PC-9 (cell line): ENCODE measurements at regions of chr15 and their contacts with region 1.

Region 1: DNA sequence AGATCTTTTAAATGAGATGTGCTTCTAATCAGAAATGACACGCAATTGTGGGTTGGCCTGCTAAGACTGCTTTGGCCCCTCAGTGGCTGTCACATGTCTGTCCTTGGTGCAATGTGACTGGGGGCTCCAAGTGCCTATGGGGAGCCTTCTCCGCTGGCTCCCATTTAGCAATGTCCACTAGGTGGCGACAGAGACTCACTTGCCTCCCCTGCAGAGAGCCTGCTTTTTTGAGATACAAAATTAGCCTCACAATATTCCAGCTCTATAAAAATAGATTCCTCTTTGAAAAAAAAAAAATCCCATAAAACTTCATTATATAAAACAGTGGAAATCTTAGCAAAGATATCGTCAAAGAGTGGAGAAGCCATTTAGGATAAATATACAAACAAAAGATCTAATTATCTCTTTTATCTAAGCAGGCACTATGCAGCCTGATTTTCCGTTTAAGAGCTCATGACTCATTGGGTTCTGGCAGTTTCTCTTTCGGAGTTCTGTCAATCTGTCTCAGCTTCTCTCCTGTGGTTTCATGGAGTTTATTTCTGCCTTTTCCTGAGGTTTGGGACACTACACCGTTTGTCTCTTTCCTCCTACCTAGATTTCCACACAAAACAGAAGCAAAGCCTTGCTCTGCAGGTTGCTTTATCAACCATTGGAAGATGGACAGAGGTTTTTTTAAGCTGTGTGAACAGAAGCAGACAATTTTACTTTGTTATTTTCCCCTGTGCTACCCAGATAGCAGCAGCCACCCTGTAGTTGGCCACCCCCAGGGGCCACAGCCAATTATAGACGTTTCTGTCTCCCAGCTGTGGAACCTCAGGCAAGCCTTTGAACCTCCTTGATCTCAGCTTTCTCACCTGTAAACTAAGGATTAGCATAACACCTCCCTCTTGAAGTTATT is 68.4 kb upstream of the TNFAIP8L3 start:
- DNase-seq: peak in 1 of 2 experiments; percentile 58
- H3K4me3 ChIP-seq: no peak overlapping the region
- H3K27ac ChIP-seq: no peak overlapping the region
- H3K4me1 ChIP-seq: no peaks in the 10 kb centered on the region
- H3K27me3 ChIP-seq: no peaks in the 10 kb centered on the region
- CTCF ChIP-seq: peak; percentile 90

Region 2: GRCh38 chr15:51281368-51281967 is 118.4 kb after region 1 on chr15:
- CTCF ChIA-PET with region 1: interaction called, 4 read pairs
- POLR2A ChIA-PET with region 1: no interaction called
- intact Hi-C with region 1: loop called (anchors 1 kb)
- DNase-seq: peak in 1 of 2 experiments; percentile 26
- H3K4me3 ChIP-seq: no peak overlapping the region
- H3K27ac ChIP-seq: no peak overlapping the region
- H3K4me1 ChIP-seq: no peaks in the 10 kb centered on the region
- H3K27me3 ChIP-seq: peaks cover 12% of the 10 kb centered on the region; the same call in 1 of the 2 replicates
- CTCF ChIP-seq: peak; percentile 58; the same call in 1 of the 2 replicates

Region 3: GRCh38 chr15:51380999-51381795 is 218.1 kb after region 1 on chr15:
- CTCF ChIA-PET with region 1: interaction called, 23 read pairs
- POLR2A ChIA-PET with region 1: no interaction called
- intact Hi-C with region 1: loop called (anchors 1 kb)
- DNase-seq: peak; percentile 45 to 49
- H3K4me3 ChIP-seq: no peak overlapping the region
- H3K27ac ChIP-seq: no peak overlapping the region
- H3K4me1 ChIP-seq: no peaks in the 10 kb centered on the region
- H3K27me3 ChIP-seq: no peaks in the 10 kb centered on the region; the same call in 1 of the 2 replicates
- CTCF ChIP-seq: peak; percentile 80

Region 4: DNA sequence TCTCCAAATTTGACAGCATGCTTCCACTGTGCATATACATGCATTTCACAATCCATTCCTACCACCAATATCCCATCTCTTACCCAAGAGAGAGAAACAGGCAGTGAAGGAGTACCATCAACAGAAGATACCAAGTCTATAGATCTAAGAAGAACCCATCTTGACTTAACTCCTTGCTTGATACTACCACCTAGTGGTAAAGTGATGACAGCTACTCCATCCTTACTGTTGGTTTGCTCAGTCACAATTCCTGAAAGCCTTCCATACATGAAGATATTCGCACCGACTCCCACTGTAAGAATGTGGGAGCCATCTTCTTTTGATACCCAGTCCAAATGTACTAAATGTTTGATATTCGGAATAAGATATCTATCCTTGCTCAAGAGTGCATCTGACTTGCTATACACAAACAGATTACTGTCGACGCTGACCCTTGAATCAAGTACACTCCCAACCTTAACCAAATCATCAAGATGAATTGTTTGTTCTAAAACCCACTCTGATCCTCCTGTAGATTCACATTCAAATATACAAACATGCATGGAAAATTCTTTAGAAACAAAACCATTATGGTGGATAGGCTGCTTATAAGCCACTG is 336.4 kb after region 1 on chr15:
- CTCF ChIA-PET with region 1: interaction called, 4 read pairs
- POLR2A ChIA-PET with region 1: no interaction called
- intact Hi-C with region 1: loop called (anchors 2 kb)
- DNase-seq: no peak
- H3K4me3 ChIP-seq: no peak overlapping the region
- H3K27ac ChIP-seq: no peak overlapping the region
- H3K4me1 ChIP-seq: no peaks in the 10 kb centered on the region
- H3K27me3 ChIP-seq: no peaks in the 10 kb centered on the region
- CTCF ChIP-seq: peak; percentile 64